Activated naive CD8-positive, alpha-beta T cell treated with anti-CD3 and anti-CD28 coated beads, Interleukin-2, amount 10 ng/mL, durations not matched to agents 7 days and 5 days (primary cell): ENCODE measurements at regions of chr21 and their contacts with region 1.

Region 1: DNA sequence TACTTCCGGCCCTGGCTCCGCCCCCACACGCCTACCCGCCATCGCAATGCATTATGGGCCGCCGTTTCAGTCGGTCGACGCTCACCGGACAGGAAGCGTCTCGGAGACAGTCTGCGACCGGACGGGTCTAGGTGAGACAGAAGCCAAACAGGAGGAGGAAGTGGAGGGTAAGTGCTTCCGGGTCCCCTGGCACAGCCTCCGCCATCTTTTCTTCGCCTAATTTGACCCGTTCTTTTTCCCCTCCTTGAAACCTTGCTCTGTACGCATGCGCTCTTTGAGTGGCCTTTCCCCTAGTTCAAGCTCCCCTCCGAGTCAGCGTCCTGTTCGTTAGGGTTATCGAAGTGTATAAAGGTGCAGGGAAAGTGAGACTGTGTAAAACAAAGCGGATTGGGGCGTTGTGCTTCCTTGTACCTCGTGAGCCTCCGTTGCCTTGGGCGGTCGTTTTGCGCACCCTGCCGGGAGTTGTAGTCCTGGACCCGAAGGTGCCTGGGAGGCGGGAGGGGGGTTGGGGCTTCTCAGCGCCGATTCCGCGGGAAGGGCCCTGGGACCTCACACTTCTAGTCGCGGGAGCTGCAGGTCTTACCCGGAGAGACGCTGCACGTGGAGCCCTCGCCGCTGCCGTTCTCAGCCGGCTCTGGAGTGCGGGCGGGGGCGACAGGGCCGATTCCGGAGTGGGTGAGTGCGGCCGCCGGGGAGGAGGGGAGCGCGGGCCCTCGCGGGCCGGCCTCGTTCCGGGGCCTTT is at the starts of genes ATP5PF and GABPA:
- DNase-seq: peak; percentile 97
- ATAC-seq: peak; percentile 92
- H3K4me3 Mint-ChIP-seq: peak within 1 kb of the TSS; percentile 100
- H3K27ac Mint-ChIP-seq: peak within 1 kb of the TSS; percentile 100
- H3K4me1 Mint-ChIP-seq: peaks cover 25% of the 10 kb centered on the region
- H3K27me3 Mint-ChIP-seq: no peaks in the 10 kb centered on the region
- total RNA-seq, gene ATP5PF: 106 to 110 TPM
- total RNA-seq, gene GABPA: 25.3 to 27.4 TPM

Region 2: GRCh38 chr21:25750085-25750484 is 15.0 kb after region 1 on chr21:
- POLR2A ChIA-PET with region 1: interaction called, 13 read pairs
- DNase-seq: peak; percentile 52
- ATAC-seq: peak; percentile 93
- H3K4me3 Mint-ChIP-seq: peak overlapping the region; percentile 73
- H3K27ac Mint-ChIP-seq: peak overlapping the region; percentile 90
- H3K4me1 Mint-ChIP-seq: peaks cover 12% of the 10 kb centered on the region
- H3K27me3 Mint-ChIP-seq: no peaks in the 10 kb centered on the region

Region 3: GRCh38 chr21:25938658-25939395 is 203.8 kb after region 1 on chr21:
- POLR2A ChIA-PET with region 1: no interaction called
- DNase-seq: no peak
- ATAC-seq: no peak
- H3K4me3 Mint-ChIP-seq: no peak overlapping the region
- H3K27ac Mint-ChIP-seq: no peak overlapping the region
- H3K4me1 Mint-ChIP-seq: peaks cover 9% of the 10 kb centered on the region
- H3K27me3 Mint-ChIP-seq: no peaks in the 10 kb centered on the region